RWPE1 (cell line): ENCODE measurements at regions of chr1 and their contacts with region 1.

Region 1: DNA sequence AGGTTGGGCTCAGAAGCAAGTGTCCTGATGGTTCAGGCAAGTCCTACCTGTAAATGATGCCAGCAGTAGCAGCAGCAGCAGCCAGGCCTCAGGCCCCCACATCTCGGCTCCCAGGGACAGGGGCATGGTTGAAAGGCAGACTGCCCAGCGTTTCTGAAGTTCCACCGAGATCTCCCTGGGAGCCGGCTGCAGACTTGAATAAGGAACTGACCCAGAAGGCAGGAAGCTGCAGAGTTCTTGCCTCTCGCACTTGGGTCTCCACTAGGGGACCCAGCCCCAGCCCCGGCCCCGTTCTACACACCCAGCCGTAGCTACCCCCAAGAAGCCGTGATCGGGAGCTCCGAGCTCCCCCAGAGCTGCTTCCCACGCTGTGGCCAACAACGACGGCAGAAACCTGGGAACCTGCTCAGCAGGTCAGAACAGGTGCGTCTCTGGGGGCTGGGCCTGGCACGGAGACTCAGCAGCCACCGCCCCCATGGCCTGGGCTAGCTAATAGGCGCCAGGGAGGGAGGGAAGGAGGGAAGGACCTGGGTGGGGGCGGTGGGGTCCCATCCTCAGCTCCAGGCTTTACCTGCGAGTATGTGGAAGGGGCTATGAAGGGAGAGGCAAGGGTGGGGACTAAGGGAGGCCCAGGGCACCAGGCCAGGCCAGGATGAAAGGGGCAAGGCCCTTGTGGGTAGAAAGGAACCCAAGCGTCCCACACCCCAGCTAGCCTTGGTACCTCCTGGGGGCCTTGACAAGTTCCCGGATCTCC is at the start of gene NECTIN4:
- DNase-seq: peak; percentile 70
- H3K27ac ChIP-seq: no peak within 1 kb of the TSS
- CTCF ChIP-seq: no peak

Region 2: GRCh38 chr1:161071886-161072371 is 17.4 kb before region 1 on chr1:
- CTCF ChIA-PET with region 1: interaction called, 75 read pairs
- POLR2A ChIA-PET with region 1: interaction called, 5 read pairs
- DNase-seq: peak; percentile 64
- H3K27ac ChIP-seq: peak overlapping the region; percentile 77; the same call in 1 of the 2 replicates
- CTCF ChIP-seq: peak; percentile 51